Activated naive CD4-positive, alpha-beta T cell treated with anti-CD3 and anti-CD28 coated beads, Interleukin-2, amount 10 ng/mL, durations not matched to agents 7 days and 5 days (primary cell): ENCODE measurements at regions of chr16 and their contacts with region 1.

Region 1: GRCh38 chr16:67326472-67327309 is at the starts of genes KCTD19 and LRRC36:
- DNase-seq: peak; percentile 60
- H3K4me3 Mint-ChIP-seq: peak within 1 kb of the TSS; percentile 73
- H3K27ac Mint-ChIP-seq: no peak within 1 kb of the TSS
- H3K4me1 Mint-ChIP-seq: peaks cover 8% of the 10 kb centered on the region
- H3K27me3 Mint-ChIP-seq: peaks cover 57% of the 10 kb centered on the region

Region 2: DNA sequence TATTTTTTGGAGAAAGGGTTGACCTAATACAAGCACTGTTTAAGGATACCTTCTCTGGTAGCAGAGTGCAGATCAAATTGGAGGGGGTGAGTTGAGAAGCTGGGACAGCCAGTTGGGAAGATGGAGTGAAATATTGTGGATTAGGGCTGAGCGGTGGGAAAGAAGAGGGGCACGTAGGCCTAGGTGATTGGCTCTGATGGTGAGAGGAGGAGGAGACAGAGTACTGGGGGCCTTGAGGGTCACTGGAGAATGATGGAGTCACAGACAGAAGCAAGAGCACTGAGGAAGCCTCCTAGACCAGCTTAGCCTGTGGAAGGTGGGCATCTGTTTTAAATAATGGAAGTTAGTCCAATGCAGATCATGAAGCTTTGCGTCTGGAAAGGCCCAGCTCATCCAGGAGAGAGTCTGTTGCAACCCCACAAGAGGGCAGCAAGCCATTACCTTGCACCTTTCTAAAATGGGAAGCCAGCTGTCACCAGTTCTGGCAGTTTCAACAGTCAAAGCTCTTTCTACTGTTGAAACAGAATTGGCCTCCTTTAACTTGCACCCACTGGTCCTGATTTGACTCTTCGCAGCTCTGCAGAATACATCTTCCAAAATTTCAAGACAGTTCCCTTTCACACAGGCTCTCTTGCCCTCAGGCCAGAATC is 66.1 kb before region 1 on chr16:
- CTCF ChIA-PET with region 1: interaction called, 10 read pairs
- DNase-seq: peak; percentile 59
- H3K4me3 Mint-ChIP-seq: no peak overlapping the region
- H3K27ac Mint-ChIP-seq: no peak overlapping the region
- H3K4me1 Mint-ChIP-seq: no peaks in the 10 kb centered on the region
- H3K27me3 Mint-ChIP-seq: peaks cover 46% of the 10 kb centered on the region